Breast epithelium (tissue), 4 donors: ENCODE measurements at regions of chr12 and their contacts with region 1.

Region 1: DNA sequence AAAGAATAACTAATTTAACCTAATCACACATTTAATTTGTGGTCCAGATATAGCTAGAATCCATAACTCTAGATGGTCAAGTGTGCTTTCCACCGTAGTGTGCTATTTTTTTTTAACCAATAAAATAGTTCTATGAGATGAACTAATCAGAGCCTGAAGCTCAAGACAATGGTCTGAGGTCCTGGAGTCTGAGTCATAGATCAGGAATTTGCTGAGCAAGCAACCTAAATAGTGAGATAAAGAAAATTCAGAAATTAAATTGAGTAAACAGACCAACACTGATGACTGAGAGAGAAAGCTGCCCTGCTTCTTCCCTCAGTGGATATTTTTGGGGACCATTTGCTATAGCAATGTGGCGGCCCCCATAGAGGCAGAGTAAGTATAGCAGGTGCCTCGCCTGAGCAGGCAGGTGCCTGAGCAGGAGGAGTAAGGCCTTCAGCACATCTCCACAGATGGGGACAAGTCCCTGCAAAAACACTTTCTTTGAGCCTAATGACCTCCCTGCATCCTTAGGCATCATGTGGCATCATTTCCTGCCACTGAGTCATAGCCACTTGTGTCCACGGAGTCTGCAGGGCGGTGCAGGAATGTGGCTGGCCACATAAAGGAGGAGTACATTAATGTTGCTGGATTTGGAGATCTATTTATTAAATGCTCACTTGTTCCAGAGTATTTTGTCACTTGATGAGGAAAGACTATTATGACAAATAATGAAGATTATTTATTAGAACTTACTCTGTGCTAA is 13.9 kb upstream of the CLEC4E start:
- DNase-seq: no peak
- H3K4me3 ChIP-seq: no peak overlapping the region
- H3K27ac ChIP-seq: no peak overlapping the region
- H3K4me1 ChIP-seq: no peaks in the 10 kb centered on the region
- H3K27me3 ChIP-seq: no peaks in the 10 kb centered on the region
- CTCF ChIP-seq: no peak
- POLR2A ChIP-seq: no peak

Region 2: DNA sequence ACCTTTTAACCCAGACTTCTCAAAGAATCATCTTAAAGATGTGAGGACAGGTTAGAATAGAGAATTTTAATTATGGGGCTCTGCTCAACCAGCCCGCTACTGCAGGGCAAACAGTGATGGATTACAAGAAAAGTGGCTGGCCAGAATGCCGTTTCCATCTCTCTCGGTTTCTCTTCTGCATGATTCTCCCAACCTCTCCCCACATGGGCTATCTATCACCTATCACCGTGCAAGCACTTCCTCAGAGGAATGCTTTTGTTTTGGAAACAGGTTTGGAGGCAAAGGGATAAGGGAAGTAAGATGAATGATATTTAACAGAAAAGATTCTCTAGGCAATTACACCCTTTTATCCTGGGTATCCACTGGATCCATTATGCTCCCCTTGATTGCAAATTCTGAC is 322.3 kb after region 1 on chr12:
- intact Hi-C with region 1: loop called (anchors 5 kb)
- DNase-seq: no peak
- H3K4me3 ChIP-seq: no peak overlapping the region
- H3K27ac ChIP-seq: no peak overlapping the region
- H3K4me1 ChIP-seq: no peaks in the 10 kb centered on the region
- H3K27me3 ChIP-seq: no peaks in the 10 kb centered on the region
- CTCF ChIP-seq: no peak
- POLR2A ChIP-seq: no peak